ENCODE measurements at regions of chr11 and their contacts with region 1.

Region 1: DNA sequence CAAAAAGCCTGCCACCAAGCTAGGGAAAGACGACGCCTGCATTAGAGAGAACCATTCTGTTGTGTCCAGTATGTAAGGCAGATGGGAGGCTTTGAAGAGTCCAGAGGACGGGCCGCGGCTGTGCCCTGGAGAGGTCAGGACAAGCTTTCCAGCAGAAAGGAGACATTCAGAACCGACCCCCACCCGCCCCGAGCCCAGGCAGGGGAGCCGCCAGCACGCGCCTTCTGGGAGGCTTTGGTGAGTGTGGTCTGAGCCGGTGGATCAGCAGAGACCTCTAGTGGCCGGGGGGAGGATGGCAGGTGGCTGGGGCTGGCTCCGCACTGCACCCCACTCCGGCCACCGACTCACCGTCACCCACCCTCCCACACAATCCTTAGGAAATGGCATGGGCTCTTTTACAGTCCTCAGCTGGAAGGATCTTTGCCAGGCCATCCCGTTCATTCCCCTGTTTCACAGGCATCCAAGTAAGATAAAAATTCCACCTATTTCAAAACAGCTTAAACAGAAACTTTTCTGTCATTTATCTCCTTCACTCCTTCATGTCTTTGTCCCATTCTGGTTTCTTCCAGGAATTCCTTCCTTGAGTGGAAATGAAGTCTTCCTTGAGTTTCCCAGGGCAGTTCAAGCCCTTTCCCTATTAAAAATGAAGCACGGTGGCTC is 91.2 kb downstream of the FEZ1 start:
- DNase-seq: peak; percentile 79
- H3K4me3 Mint-ChIP-seq: no peak overlapping the region
- H3K27ac Mint-ChIP-seq: no peak overlapping the region
- H3K4me1 Mint-ChIP-seq: peaks cover 6% of the 10 kb centered on the region
- H3K27me3 Mint-ChIP-seq: peaks cover 48% of the 10 kb centered on the region

Region 2: DNA sequence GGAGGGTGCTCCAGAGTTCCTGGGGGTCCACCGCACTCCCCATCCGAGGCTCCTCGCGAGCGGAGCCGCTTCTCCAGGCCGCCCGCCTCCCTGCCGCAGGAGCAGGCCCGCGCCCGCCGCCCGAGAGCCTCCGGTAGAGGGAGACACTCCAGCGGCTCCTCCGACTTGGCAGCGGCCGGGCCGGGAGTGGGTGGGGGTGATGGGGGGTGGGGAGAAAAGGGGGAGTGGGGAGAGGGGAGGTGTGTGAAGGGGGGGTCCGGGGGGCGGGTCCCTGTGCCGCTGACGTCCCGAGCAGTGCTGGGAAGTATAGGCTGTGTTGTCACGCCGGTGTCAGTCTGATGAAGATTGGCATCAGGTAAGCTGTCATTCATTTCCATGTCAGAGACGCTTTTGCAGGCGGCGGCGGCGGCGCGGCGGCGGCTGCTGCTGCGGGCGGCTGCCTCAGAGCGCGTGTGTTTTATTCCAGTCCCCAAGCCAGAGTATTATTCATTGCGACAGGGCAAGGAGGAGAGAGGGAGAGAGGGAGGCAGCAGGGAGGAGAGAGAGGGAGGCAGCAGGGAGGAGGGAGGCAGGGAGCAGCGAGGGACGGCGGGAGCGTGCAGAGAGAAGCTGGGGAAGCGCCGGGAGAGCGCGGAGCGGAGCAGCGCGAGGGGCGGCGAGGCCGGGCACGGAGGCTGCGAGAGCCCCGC is 240.3 kb before region 1 on chr11 and contains the start of gene PKNOX2:
- CTCF ChIA-PET with region 1: no interaction called
- POLR2A ChIA-PET with region 1: no interaction called
- intact Hi-C with region 1: loop called (anchors 10 kb)
- DNase-seq: peak; percentile 70
- H3K4me3 Mint-ChIP-seq: peak within 1 kb of the TSS; percentile 77
- H3K27ac Mint-ChIP-seq: no peak within 1 kb of the TSS
- H3K4me1 Mint-ChIP-seq: peaks cover 17% of the 10 kb centered on the region
- H3K27me3 Mint-ChIP-seq: peaks cover 48% of the 10 kb centered on the region
- total RNA-seq, gene PKNOX2: not detected

Region 3: DNA sequence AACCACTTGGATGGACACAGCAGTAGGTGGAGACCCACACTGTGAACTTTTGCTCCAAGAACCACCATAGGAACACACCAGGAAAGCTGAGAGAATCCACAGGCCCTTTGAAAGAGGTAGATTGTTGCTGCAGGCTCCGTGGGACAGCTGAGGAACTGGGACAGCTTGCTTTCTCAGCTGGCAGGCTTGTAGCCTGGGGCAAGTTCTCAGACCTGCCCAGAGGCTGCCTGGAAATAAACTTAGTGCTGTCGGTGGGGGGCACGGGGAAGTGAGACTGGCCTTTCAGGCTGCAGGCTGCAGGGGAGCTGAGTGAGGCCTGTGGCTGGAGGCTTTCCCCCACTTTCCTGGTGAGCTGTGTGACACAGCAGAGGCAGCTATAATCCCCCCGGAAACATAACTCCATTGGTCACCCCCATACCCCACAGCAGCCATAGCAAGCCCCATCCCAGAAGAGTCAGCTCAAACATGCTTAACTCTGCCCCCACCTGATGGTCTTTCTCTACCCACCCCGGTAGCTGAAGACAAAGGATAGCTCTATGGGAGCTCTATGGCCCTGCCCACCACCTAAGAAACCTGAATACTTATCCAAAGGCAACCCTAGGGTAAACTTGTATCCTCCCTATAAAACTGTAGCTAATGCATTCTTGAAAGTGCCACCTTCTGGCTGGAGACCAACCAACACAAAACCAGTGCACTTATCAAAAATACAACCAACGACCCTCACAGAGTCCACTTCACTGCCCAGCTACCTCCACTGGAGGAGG is 297.1 kb after region 1 on chr11:
- CTCF ChIA-PET with region 1: no interaction called
- POLR2A ChIA-PET with region 1: no interaction called
- intact Hi-C with region 1: no loop called
- DNase-seq: no peak
- H3K4me3 Mint-ChIP-seq: no peak overlapping the region
- H3K27ac Mint-ChIP-seq: no peak overlapping the region
- H3K4me1 Mint-ChIP-seq: no peaks in the 10 kb centered on the region
- H3K27me3 Mint-ChIP-seq: peaks cover 12% of the 10 kb centered on the region

Measured in activated CD4-positive, alpha-beta memory T cell treated with anti-CD3 and anti-CD28 coated beads for 36 hours (primary cell).